Gastrocnemius medialis (tissue), 4 donors: ENCODE measurements at regions of chr2 and their contacts with region 1.

Region 1: GRCh38 chr2:86368161-86368824 is 30.9 kb upstream of the REEP1 start:
- DNase-seq: no peak
- ATAC-seq: peak; percentile 42 to 51
- H3K4me3 ChIP-seq: peak overlapping the region in 1 of 4 donors; percentile 18
- H3K27ac ChIP-seq: no peak overlapping the region
- H3K4me1 ChIP-seq: no peaks in the 10 kb centered on the region
- H3K27me3 ChIP-seq: no peaks in the 10 kb centered on the region
- CTCF ChIP-seq: peak; percentile 42 to 72 (median 55)
- POLR2A ChIP-seq: no peak

Region 2: DNA sequence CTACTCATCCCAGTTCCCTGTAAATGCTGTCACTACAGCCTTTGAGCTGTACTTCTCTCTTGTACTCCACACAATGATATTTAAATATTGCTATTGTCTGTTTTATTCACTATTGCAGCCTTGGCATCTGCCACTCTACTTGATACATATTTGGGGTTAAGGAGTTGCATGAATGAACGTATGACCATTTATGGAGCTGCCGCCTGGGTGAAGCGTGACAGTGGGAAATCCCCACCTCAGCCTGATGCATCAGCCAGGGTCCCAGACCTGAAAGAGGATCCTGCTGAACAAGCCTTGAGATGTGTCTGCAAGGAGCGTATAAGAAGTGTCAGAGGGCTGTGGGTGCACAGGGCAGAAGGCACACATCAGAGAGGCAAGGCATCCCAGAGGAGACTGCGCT is 129.9 kb before region 1 on chr2:
- in situ Hi-C with region 1: loop called in 1 of 4 experiments (anchors 10 kb)
- intact Hi-C with region 1: no loop called
- DNase-seq: no peak
- ATAC-seq: no peak
- H3K4me3 ChIP-seq: no peak overlapping the region
- H3K27ac ChIP-seq: no peak overlapping the region
- H3K4me1 ChIP-seq: peaks cover 7 to 13% of the 10 kb centered on the region in 2 donors
- H3K27me3 ChIP-seq: no peaks in the 10 kb centered on the region
- CTCF ChIP-seq: no peak
- POLR2A ChIP-seq: no peak

Region 3: DNA sequence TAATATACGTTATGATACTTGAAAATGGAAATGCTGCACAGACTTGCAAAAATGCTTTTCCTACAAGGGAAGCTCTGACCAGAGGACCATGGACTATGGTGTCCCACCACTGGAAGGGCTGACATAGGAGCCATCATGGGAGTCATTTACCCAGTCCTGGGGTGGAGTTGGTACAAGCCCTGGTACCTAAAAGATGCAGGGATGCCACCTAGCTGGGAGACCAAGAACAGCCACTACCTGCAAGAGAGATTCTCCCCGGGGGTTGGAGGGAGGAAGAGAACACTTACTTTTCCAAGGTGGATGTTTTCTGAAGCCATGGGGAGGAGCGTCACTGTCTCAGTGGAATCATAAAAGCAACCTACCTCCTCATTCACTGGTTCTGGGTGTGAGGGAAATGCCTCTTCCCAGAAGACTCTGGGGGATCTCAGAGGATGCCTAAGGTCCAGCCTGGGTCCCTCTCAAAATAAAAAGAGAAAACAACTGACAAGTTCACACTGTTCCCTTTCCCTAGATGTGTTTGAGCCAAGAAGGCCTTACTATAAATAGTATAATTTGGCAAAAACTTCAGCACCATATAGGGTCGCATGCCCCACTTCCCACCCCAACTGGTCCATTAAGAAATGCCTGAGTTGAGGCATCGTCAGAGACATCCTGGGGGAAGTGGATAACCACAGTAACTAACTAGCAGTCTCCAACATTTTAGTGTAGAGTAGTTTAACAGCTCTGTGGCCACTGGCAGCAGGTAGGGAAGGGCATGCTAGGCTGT is 70.7 kb before region 1 on chr2:
- in situ Hi-C with region 1: no loop called
- intact Hi-C with region 1: loop called (anchors 2 kb)
- DNase-seq: no peak
- ATAC-seq: peak; percentile 48 to 50
- H3K4me3 ChIP-seq: no peak overlapping the region
- H3K27ac ChIP-seq: peak overlapping the region in 3 of 4 donors; percentile 8 to 56 (median 38)
- H3K4me1 ChIP-seq: peaks cover 44 to 47% of the 10 kb centered on the region in 2 donors
- H3K27me3 ChIP-seq: no peaks in the 10 kb centered on the region
- CTCF ChIP-seq: peak in 2 of 5 experiments; percentile 27 to 38
- POLR2A ChIP-seq: no peak

Region 4: GRCh38 chr2:86498468-86499250 is 130.4 kb after region 1 on chr2:
- in situ Hi-C with region 1: no loop called
- intact Hi-C with region 1: no loop called
- DNase-seq: no peak
- ATAC-seq: peak in 1 of 2 donors; percentile 47
- H3K4me3 ChIP-seq: no peak overlapping the region
- H3K27ac ChIP-seq: no peak overlapping the region
- H3K4me1 ChIP-seq: peaks cover 0 to 7% of the 10 kb centered on the region in 2 donors
- H3K27me3 ChIP-seq: no peaks in the 10 kb centered on the region
- CTCF ChIP-seq: no peak
- POLR2A ChIP-seq: no peak